Heart left ventricle (tissue), 16 donors: ENCODE measurements at regions of chr15 and their contacts with region 1.

Region 1: GRCh38 chr15:29967956-29968889 is 114.5 kb upstream of the GOLGA8J start:
- DNase-seq: no peak
- ATAC-seq: peak in 2 of 4 donors; percentile 20 to 47
- H3K4me3 ChIP-seq: peak overlapping the region in 11 of 12 donors; percentile 18 to 54 (median 44)
- H3K27ac ChIP-seq: no peak overlapping the region
- H3K4me1 ChIP-seq: peaks cover 0 to 9% (median 0%) of the 10 kb centered on the region in 12 donors
- H3K27me3 ChIP-seq: peaks cover 2 to 54% (median 16%) of the 10 kb centered on the region in 9 donors
- CTCF ChIP-seq: no peak
- POLR2A ChIP-seq: no peak

Region 2: DNA sequence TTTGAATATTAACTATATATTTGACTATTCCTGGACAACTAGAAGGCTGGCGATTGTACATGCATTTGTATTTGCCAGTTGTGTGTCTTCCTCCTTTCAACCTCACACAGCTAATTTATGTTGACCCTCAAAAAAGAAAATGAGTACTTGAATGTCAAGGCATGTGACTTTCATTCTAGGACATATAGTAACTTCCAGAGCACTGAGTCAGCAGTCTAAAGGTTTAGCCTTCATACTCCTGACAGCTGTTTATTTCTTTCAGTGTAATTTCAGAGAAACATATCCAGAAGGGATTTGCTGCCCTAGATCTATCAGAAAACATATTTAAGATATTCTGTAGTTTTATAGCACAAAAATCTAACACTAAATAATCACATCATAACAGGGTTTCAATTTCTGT is 39.9 kb after region 1 on chr15:
- intact Hi-C with region 1: no loop called
- DNase-seq: no peak
- ATAC-seq: no peak
- H3K4me3 ChIP-seq: no peak overlapping the region
- H3K27ac ChIP-seq: no peak overlapping the region
- H3K4me1 ChIP-seq: no peaks in the 10 kb centered on the region
- H3K27me3 ChIP-seq: peaks cover 0 to 11% (median 0%) of the 10 kb centered on the region in 9 donors
- CTCF ChIP-seq: no peak
- POLR2A ChIP-seq: no peak

Region 3: GRCh38 chr15:30059771-30060170 is 91.5 kb after region 1 on chr15:
- intact Hi-C with region 1: loop called in 1 of 10 experiments (anchors 10 kb)
- DNase-seq: no peak
- ATAC-seq: no peak
- H3K4me3 ChIP-seq: no peak overlapping the region
- H3K27ac ChIP-seq: no peak overlapping the region
- H3K4me1 ChIP-seq: peaks cover 0 to 6% (median 0%) of the 10 kb centered on the region in 12 donors
- H3K27me3 ChIP-seq: no peaks in the 10 kb centered on the region
- CTCF ChIP-seq: no peak
- POLR2A ChIP-seq: no peak